OCI-LY7 (cell line): ENCODE measurements at regions of chrX and their contacts with region 1.

Region 1: GRCh38 chrX:120250522-120251271 is at the start of gene ZBTB33:
- DNase-seq: peak; percentile 90
- H3K4me3 ChIP-seq: peak within 1 kb of the TSS; percentile 92
- H3K27ac ChIP-seq: peak within 1 kb of the TSS; percentile 90
- H3K4me1 ChIP-seq: peaks cover 14% of the 10 kb centered on the region
- CTCF ChIP-seq: peak; percentile 70
- total RNA-seq, gene ZBTB33: 16.7 TPM in 2 replicates

Region 2: GRCh38 chrX:120262859-120263708 is 12.4 kb after region 1 on chrX:
- CTCF ChIA-PET with region 1: no interaction called
- POLR2A ChIA-PET with region 1: interaction called, 13 read pairs
- intact Hi-C with region 1: no loop called
- DNase-seq: peak; percentile 75
- H3K4me3 ChIP-seq: no peak overlapping the region
- H3K27ac ChIP-seq: peak overlapping the region; percentile 83
- H3K4me1 ChIP-seq: peaks cover 41% of the 10 kb centered on the region
- CTCF ChIP-seq: no peak

Region 3: GRCh38 chrX:120302434-120302833 is 51.7 kb after region 1 on chrX:
- CTCF ChIA-PET with region 1: no interaction called
- POLR2A ChIA-PET with region 1: no interaction called
- intact Hi-C with region 1: loop called (anchors 2 kb)
- DNase-seq: peak; percentile 85
- H3K4me3 ChIP-seq: peak overlapping the region; percentile 57
- H3K27ac ChIP-seq: peak overlapping the region; percentile 72
- H3K4me1 ChIP-seq: peaks cover 43% of the 10 kb centered on the region
- CTCF ChIP-seq: no peak

Region 4: DNA sequence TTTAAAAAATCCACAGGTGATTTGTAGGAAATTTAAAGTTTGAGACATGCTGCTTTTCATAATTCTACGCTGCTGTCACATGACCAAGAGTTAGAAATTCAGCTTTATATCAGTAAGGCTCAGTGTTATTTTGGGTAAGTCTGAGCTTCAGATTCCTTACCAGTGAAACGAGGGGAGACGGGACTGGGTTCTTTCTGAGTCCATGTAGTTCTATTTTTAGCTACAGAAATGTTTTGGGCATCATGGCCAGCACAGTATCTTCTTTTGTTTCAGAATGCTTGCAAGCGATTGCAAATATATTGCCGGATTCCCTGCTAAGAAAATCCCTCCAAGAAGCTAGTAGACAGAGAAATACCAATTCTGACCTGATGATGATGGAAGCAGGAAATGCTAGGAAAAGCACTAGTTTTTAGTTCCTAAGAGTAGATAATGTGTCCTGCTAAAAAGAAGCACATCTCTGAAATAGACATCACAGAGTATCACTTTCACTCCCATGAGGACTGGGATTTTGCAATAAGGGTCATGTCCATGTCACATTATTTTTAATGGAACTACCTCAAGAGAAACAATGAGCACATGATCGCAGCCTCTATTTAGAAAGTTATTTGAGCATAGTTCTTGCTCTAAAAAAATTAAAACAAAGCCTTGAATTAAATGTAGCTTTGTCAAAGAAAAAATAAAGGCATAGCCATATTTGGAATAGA is 122.1 kb after region 1 on chrX:
- CTCF ChIA-PET with region 1: no interaction called
- POLR2A ChIA-PET with region 1: no interaction called
- intact Hi-C with region 1: no loop called
- DNase-seq: no peak
- H3K4me3 ChIP-seq: no peak overlapping the region
- H3K27ac ChIP-seq: no peak overlapping the region
- H3K4me1 ChIP-seq: peaks cover 14% of the 10 kb centered on the region
- CTCF ChIP-seq: no peak

Region 5: GRCh38 chrX:120468825-120469525 is 218.3 kb after region 1 on chrX and contains the start of gene LAMP2:
- CTCF ChIA-PET with region 1: no interaction called
- POLR2A ChIA-PET with region 1: no interaction called
- intact Hi-C with region 1: loop called (anchors 5 kb)
- DNase-seq: peak; percentile 90
- H3K4me3 ChIP-seq: peak within 1 kb of the TSS; percentile 75
- H3K27ac ChIP-seq: peak within 1 kb of the TSS; percentile 53
- H3K4me1 ChIP-seq: peaks cover 9% of the 10 kb centered on the region
- CTCF ChIP-seq: no peak
- total RNA-seq, gene LAMP2: 12.2 and 17.9 TPM in 2 replicates